Mammary epithelial cell (primary cell): ENCODE measurements at regions of chr7 and their contacts with region 1.

Region 1: GRCh38 chr7:33932832-33933468 is 27.6 kb downstream of the BMPER start:
- DNase-seq: peak; percentile 82
- H3K4me3 ChIP-seq: peak overlapping the region in 1 of 3 experiments; percentile 7
- H3K27ac ChIP-seq: peak overlapping the region; percentile 4
- H3K4me1 ChIP-seq: peaks cover 19% of the 10 kb centered on the region
- H3K27me3 ChIP-seq: no peaks in the 10 kb centered on the region
- CTCF ChIP-seq: peak; percentile 97 to 99

Region 2: DNA sequence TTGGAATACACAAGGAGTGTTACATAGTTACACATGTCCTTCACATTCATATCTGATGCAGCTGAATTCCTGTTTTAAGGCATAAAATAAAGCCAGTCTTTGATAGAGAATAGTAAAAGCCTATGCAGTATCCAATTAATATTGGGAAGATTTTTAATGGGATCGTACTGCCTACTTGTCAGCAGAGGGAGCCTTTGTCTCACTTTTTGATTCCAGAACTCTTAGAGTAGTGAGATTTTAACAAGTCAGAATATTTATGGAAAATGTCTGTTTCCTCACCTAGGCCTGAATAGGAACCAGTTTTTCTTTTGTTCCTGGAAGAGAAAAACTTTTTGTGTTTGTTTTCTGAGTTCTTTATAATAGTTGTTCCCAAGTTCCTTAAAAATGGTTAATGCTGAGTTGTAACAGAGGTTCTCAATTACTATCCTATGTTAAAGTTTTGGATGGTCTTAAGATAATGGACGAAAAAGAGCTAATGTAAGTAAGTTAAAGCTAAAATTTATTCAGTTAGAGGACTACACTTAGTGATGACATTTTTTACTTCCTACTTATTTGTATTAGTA is 689.5 kb before region 1 on chr7:
- CTCF ChIA-PET with region 1: no interaction called
- dilution Hi-C with region 1: no loop called
- in situ Hi-C with region 1: loop called in 1 of 2 experiments (anchors 25 kb)
- intact Hi-C with region 1: loop called (anchors 2 kb)
- DNase-seq: peak; percentile 27
- H3K4me3 ChIP-seq: no peak overlapping the region
- H3K27ac ChIP-seq: no peak overlapping the region
- H3K4me1 ChIP-seq: no peaks in the 10 kb centered on the region
- H3K27me3 ChIP-seq: no peaks in the 10 kb centered on the region
- CTCF ChIP-seq: peak; percentile 64 to 71

Region 3: DNA sequence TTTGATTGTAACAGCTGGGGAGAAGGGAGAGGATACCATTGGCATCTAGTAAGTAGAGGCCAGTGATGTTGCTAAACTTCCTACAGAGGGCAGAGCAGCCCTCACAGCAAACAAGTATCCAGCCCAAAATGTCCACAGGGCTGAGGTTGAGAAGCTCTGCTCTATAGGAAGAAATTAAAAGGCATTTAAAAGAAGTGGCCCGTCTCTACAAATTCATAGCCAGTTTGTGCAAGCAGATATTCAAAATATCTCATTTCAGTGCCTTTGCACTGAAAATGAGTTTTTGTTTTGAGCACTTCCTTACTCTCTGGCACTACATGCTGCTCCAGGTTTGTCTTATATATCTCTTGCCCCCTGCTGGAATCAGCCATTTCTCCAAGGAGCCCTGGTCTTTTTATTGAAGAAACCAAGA is 473.6 kb before region 1 on chr7:
- CTCF ChIA-PET with region 1: no interaction called
- dilution Hi-C with region 1: no loop called
- in situ Hi-C with region 1: no loop called
- intact Hi-C with region 1: loop called (anchors 10 kb)
- DNase-seq: peak; percentile 37
- H3K4me3 ChIP-seq: no peak overlapping the region
- H3K27ac ChIP-seq: no peak overlapping the region
- H3K4me1 ChIP-seq: no peaks in the 10 kb centered on the region
- H3K27me3 ChIP-seq: peaks cover 5% of the 10 kb centered on the region
- CTCF ChIP-seq: peak; percentile 21 to 60

Region 4: GRCh38 chr7:33807779-33808482 is 125.0 kb before region 1 on chr7:
- CTCF ChIA-PET with region 1: interaction called, 10 read pairs
- dilution Hi-C with region 1: no loop called
- in situ Hi-C with region 1: no loop called
- intact Hi-C with region 1: loop called (anchors 1 kb)
- DNase-seq: peak; percentile 95
- H3K4me3 ChIP-seq: no peak overlapping the region
- H3K27ac ChIP-seq: peak overlapping the region; percentile 99
- H3K4me1 ChIP-seq: peaks cover 28% of the 10 kb centered on the region
- H3K27me3 ChIP-seq: no peaks in the 10 kb centered on the region
- CTCF ChIP-seq: peak; percentile 93 to 94

Region 5: GRCh38 chr7:33895025-33895804 is 37.7 kb before region 1 on chr7:
- CTCF ChIA-PET with region 1: interaction called, 3 read pairs
- dilution Hi-C with region 1: no loop called
- in situ Hi-C with region 1: no loop called
- intact Hi-C with region 1: loop called (anchors 2 kb)
- DNase-seq: peak; percentile 77
- H3K4me3 ChIP-seq: no peak overlapping the region
- H3K27ac ChIP-seq: no peak overlapping the region
- H3K4me1 ChIP-seq: peaks cover 5% of the 10 kb centered on the region
- H3K27me3 ChIP-seq: no peaks in the 10 kb centered on the region
- CTCF ChIP-seq: peak; percentile 88 to 93

Region 6: GRCh38 chr7:34117573-34117972 is 184.6 kb after region 1 on chr7:
- CTCF ChIA-PET with region 1: no interaction called
- dilution Hi-C with region 1: no loop called
- in situ Hi-C with region 1: no loop called
- intact Hi-C with region 1: no loop called
- DNase-seq: no peak
- H3K4me3 ChIP-seq: no peak overlapping the region
- H3K27ac ChIP-seq: no peak overlapping the region
- H3K4me1 ChIP-seq: no peaks in the 10 kb centered on the region
- H3K27me3 ChIP-seq: no peaks in the 10 kb centered on the region
- CTCF ChIP-seq: no peak